H1 (cell line): ENCODE measurements at regions of chr1 and their contacts with region 1.

Region 1: GRCh38 chr1:160108888-160109662 is 6.5 kb upstream of the ATP1A2 start:
- DNase-seq: peak in 1 of 2 experiments; percentile 69
- H3K4me3 ChIP-seq: no peak overlapping the region
- H3K27ac ChIP-seq: no peak overlapping the region
- H3K4me1 ChIP-seq: peaks cover 8 to 32% (median 20%) of the 10 kb centered on the region in 4 experiments
- H3K27me3 ChIP-seq: no peaks in the 10 kb centered on the region; a peak in 1 of 7 replicates
- CTCF ChIP-seq: peak; percentile 4 to 73 (median 44)
- EP300 ChIP-seq: peak in 1 of 2 experiments; percentile 49; a peak in 1 of 3 replicates
- POLR2A ChIP-seq: no peak
- RAD21 ChIP-seq: peak; percentile 24 to 35; a peak in 3 of 4 replicates

Region 2: DNA sequence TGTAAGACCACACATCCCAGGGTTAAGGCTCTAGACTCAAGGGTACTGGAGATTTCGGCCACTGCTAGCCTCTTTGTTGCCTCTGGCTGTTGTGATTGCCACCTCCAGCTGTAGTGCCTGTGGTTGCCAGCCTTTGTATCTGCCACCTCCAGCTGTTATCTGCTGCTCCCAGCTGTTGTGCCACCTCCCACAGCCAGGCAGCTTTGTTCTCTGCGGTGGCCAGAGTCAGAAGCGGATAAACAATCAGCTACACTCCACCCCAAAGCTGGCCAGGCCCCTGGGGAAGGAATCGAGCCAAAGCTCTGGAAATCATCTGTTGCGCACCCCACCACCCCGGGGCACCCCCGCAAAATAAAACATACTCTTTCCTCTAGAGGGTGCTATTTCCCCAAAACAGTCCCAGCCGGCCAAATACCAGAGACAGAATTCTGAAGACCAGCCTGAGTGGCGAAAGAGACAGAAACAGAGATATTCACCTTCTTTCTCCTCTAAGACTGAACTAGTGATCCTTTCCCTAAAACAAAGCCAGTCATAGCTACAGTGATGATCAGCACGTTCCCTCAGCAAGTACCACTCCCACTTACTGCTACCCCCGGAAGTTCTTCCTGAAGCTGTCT is 62.5 kb before region 1 on chr1:
- CTCF ChIA-PET with region 1: interaction called, 12 read pairs
- POLR2A ChIA-PET with region 1: no interaction called
- DNase-seq: peak in 1 of 2 experiments; percentile 76
- H3K4me3 ChIP-seq: peak overlapping the region in 1 of 4 experiments; percentile 14; a peak in 2 of 8 replicates
- H3K27ac ChIP-seq: no peak overlapping the region
- H3K4me1 ChIP-seq: peaks cover 10 to 24% (median 16%) of the 10 kb centered on the region in 4 experiments
- H3K27me3 ChIP-seq: no peaks in the 10 kb centered on the region; a peak in 1 of 7 replicates
- CTCF ChIP-seq: peak; percentile 45 to 76 (median 69)
- EP300 ChIP-seq: peak in 1 of 2 experiments; percentile 17; a peak in 2 of 3 replicates
- POLR2A ChIP-seq: no peak
- RAD21 ChIP-seq: peak; percentile 71 to 80

Region 3: GRCh38 chr1:160085686-160086455 is 23.2 kb before region 1 on chr1:
- CTCF ChIA-PET with region 1: interaction called, 83 read pairs
- POLR2A ChIA-PET with region 1: interaction called, 6 read pairs
- DNase-seq: peak; percentile 88 to 96
- H3K4me3 ChIP-seq: no peak overlapping the region
- H3K27ac ChIP-seq: no peak overlapping the region
- H3K4me1 ChIP-seq: peaks cover 0 to 5% (median 3%) of the 10 kb centered on the region in 4 experiments; a peak in 4 of 7 replicates
- H3K27me3 ChIP-seq: peaks cover 0 to 35% (median 27%) of the 10 kb centered on the region in 4 experiments; a peak in 6 of 7 replicates
- CTCF ChIP-seq: peak; percentile 91 to 99 (median 95)
- EP300 ChIP-seq: no peak
- POLR2A ChIP-seq: no peak
- RAD21 ChIP-seq: peak; percentile 83 to 88

Region 4: GRCh38 chr1:160124705-160125478 is 15.8 kb after region 1 on chr1:
- CTCF ChIA-PET with region 1: interaction called, 256 read pairs
- POLR2A ChIA-PET with region 1: interaction called, 4 read pairs
- DNase-seq: no peak
- H3K4me3 ChIP-seq: no peak overlapping the region
- H3K27ac ChIP-seq: no peak overlapping the region
- H3K4me1 ChIP-seq: peaks cover 0 to 6% (median 0%) of the 10 kb centered on the region in 4 experiments; a peak in 2 of 7 replicates
- H3K27me3 ChIP-seq: no peaks in the 10 kb centered on the region
- CTCF ChIP-seq: peak in 2 of 3 experiments; percentile 25 to 39; a peak in 3 of 4 replicates
- EP300 ChIP-seq: no peak
- POLR2A ChIP-seq: no peak
- RAD21 ChIP-seq: peak; percentile 30 to 47; a peak in 3 of 4 replicates

Region 5: GRCh38 chr1:160149716-160150115 is 40.6 kb after region 1 on chr1:
- CTCF ChIA-PET with region 1: interaction called, 15 read pairs
- POLR2A ChIA-PET with region 1: interaction called, 4 read pairs
- DNase-seq: no peak
- H3K4me3 ChIP-seq: no peak overlapping the region
- H3K27ac ChIP-seq: no peak overlapping the region
- H3K4me1 ChIP-seq: 0 out of 7 replicates have a peak, but pooled peaks cover 0 to 2% (median 0%) of the 10 kb centered on the region in 4 experiments
- H3K27me3 ChIP-seq: no peaks in the 10 kb centered on the region; a peak in 1 of 7 replicates
- CTCF ChIP-seq: no peak
- EP300 ChIP-seq: no peak
- POLR2A ChIP-seq: no peak
- RAD21 ChIP-seq: no peak

Region 6: GRCh38 chr1:160169553-160170399 is 60.7 kb after region 1 on chr1:
- CTCF ChIA-PET with region 1: interaction called, 10 read pairs
- POLR2A ChIA-PET with region 1: no interaction called
- DNase-seq: peak; percentile 79 to 86
- H3K4me3 ChIP-seq: peak overlapping the region in 3 of 4 experiments; percentile 7 to 50 (median 13); a peak in 5 of 8 replicates
- H3K27ac ChIP-seq: peak overlapping the region; percentile 46; the same call in 1 of the 2 replicates
- H3K4me1 ChIP-seq: peaks cover 12 to 28% (median 22%) of the 10 kb centered on the region in 4 experiments; a peak in 6 of 7 replicates
- H3K27me3 ChIP-seq: peaks cover 0 to 2% (median under 1%) of the 10 kb centered on the region in 4 experiments; a peak in 2 of 7 replicates
- CTCF ChIP-seq: no peak
- EP300 ChIP-seq: peak in 1 of 2 experiments; percentile 96; a peak in 2 of 3 replicates
- POLR2A ChIP-seq: no peak
- RAD21 ChIP-seq: no peak

Region 7: GRCh38 chr1:160419838-160420169 is 310.7 kb after region 1 on chr1:
- CTCF ChIA-PET with region 1: no interaction called
- POLR2A ChIA-PET with region 1: no interaction called
- DNase-seq: no peak
- H3K4me3 ChIP-seq: no peak overlapping the region
- H3K27ac ChIP-seq: no peak overlapping the region
- H3K4me1 ChIP-seq: no peaks in the 10 kb centered on the region
- H3K27me3 ChIP-seq: no peaks in the 10 kb centered on the region
- CTCF ChIP-seq: no peak
- EP300 ChIP-seq: no peak
- POLR2A ChIP-seq: no peak
- RAD21 ChIP-seq: no peak